Mammary epithelial cell (primary cell): ENCODE measurements at regions of chr1 and their contacts with region 1.

Region 1: GRCh38 chr1:67685067-67685557 is at the start of gene GADD45A:
- DNase-seq: peak; percentile 99
- H3K4me3 ChIP-seq: peak within 1 kb of the TSS; percentile 78 to 96 (median 79)
- H3K27ac ChIP-seq: peak within 1 kb of the TSS; percentile 97
- H3K4me1 ChIP-seq: peaks cover 26% of the 10 kb centered on the region
- H3K27me3 ChIP-seq: no peaks in the 10 kb centered on the region
- CTCF ChIP-seq: no peak
- total RNA-seq, gene GADD45A: 119 to 371 TPM

Region 2: GRCh38 chr1:67570473-67571143 is 114.5 kb before region 1 on chr1:
- CTCF ChIA-PET with region 1: no interaction called
- dilution Hi-C with region 1: no loop called
- in situ Hi-C with region 1: loop called (anchors 5 kb)
- intact Hi-C with region 1: loop called (anchors 1 kb)
- DNase-seq: peak; percentile 99
- H3K4me3 ChIP-seq: no peak overlapping the region
- H3K27ac ChIP-seq: peak overlapping the region; percentile 97
- H3K4me1 ChIP-seq: peaks cover 53% of the 10 kb centered on the region
- H3K27me3 ChIP-seq: no peaks in the 10 kb centered on the region
- CTCF ChIP-seq: no peak

Region 3: DNA sequence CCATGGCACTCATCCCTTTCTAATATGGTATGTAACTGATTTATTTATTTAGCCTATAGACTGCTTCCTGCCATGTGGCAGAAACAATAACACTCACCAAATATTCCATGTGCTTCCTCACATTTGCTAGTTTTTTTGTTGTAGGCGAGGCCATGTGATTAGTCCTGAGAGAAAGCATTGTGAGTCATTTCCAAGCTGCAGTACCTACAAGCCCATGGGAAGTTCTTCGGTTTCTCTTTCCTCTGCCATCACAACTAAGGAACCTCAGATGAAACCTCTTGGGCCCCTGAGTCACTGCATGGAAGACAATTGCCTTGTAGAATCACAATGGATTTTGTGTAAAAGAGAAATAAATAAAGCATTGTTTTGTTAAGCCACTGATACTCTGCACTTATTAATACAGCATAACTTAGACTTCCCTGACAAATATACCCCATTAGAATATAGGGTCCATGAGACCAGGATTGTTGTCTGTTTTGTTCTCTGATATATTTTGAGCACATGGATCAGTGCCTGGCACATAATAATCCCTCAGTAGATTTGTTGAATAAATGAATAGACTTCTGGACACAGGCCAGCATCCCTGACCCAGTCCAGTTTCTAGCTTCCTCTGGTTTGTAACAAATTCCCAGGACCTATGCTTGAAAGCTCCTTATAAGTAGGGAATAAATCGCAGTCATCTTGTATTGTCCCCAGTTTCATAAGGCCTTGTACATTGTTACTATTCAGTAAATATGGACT is 58.4 kb before region 1 on chr1:
- CTCF ChIA-PET with region 1: interaction called, 3 read pairs
- dilution Hi-C with region 1: loop called (anchors 5 kb)
- in situ Hi-C with region 1: no loop called
- intact Hi-C with region 1: loop called (anchors 2 kb)
- DNase-seq: peak; percentile 100
- H3K4me3 ChIP-seq: no peak overlapping the region
- H3K27ac ChIP-seq: peak overlapping the region; percentile 97
- H3K4me1 ChIP-seq: peaks cover 55% of the 10 kb centered on the region
- H3K27me3 ChIP-seq: no peaks in the 10 kb centered on the region
- CTCF ChIP-seq: no peak

Region 4: DNA sequence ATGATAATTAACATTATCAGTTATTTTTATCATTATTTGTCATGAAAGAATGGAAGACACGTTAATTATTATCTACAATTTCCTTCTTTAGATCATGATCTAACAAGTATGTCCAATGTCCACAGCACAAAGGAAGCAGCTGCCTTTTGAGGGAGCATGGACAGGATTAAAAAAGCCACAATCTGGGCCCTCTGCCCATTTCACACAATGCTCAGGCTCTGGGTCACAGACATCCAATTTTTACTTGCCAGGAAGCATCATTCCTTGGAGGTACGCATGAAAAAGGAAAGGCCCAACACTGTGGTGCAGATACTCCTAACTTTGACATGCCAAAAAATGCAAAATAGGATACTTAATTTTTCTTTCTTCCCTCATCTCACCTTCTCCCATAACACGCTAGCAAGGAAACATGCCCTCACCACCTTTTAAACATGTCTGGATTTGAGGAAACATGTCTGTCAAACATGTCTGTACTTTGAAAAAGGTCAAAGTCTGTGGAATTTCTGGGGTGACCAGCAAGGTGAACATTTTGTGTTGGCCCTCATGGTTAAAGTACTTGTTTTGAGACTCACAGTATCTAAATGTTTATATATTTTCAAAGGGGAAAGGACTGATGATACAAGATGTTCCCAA is 39.9 kb after region 1 on chr1:
- CTCF ChIA-PET with region 1: no interaction called
- dilution Hi-C with region 1: loop called (anchors 5 kb)
- in situ Hi-C with region 1: no loop called
- intact Hi-C with region 1: no loop called
- DNase-seq: peak; percentile 85
- H3K4me3 ChIP-seq: no peak overlapping the region
- H3K27ac ChIP-seq: peak overlapping the region; percentile 89
- H3K4me1 ChIP-seq: peaks cover 57% of the 10 kb centered on the region
- H3K27me3 ChIP-seq: no peaks in the 10 kb centered on the region
- CTCF ChIP-seq: no peak

Region 5: DNA sequence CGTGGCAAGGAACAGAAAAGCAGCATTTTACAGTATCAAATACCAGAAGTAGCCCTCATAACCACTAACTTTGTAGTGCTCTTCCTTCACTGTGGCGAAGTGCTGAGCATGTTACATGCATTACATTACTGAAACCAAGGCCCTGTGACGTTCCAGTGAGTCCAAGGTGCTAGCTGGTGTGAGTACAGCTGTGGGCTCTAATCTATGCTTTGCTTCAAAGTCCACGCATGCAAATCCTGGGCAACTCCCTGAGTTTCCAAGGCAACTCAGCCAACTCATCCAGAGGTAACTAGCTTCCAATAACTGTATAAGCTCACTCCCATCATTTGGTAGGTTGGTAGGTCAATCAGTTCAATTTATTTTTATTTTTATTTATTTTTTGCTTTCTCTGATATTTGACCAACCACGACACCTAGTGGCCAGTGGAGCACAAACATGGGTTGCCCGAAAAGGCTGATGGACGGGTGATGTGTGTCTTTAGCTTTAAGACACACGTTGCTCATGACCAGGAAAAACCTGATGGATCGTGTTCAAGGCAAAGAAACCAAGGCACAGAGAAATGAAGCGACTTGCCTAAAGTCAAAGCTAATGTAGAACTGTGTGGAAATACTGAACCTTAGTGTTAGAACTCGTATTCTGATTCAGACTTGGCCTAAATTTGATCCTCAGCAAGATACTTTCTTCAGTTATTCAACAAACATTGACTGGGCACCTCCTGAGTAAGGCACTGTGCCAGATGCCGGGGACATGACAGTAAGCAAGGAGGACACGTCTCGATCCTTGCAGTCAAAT is 75.1 kb after region 1 on chr1:
- CTCF ChIA-PET with region 1: interaction called, 4 read pairs
- dilution Hi-C with region 1: no loop called
- in situ Hi-C with region 1: loop called in 1 of 2 experiments (anchors 5 kb)
- intact Hi-C with region 1: loop called (anchors 1 kb)
- DNase-seq: peak; percentile 81
- H3K4me3 ChIP-seq: no peak overlapping the region
- H3K27ac ChIP-seq: peak overlapping the region; percentile 91
- H3K4me1 ChIP-seq: peaks cover 37% of the 10 kb centered on the region
- H3K27me3 ChIP-seq: no peaks in the 10 kb centered on the region
- CTCF ChIP-seq: peak; percentile 73 to 77

Region 6: DNA sequence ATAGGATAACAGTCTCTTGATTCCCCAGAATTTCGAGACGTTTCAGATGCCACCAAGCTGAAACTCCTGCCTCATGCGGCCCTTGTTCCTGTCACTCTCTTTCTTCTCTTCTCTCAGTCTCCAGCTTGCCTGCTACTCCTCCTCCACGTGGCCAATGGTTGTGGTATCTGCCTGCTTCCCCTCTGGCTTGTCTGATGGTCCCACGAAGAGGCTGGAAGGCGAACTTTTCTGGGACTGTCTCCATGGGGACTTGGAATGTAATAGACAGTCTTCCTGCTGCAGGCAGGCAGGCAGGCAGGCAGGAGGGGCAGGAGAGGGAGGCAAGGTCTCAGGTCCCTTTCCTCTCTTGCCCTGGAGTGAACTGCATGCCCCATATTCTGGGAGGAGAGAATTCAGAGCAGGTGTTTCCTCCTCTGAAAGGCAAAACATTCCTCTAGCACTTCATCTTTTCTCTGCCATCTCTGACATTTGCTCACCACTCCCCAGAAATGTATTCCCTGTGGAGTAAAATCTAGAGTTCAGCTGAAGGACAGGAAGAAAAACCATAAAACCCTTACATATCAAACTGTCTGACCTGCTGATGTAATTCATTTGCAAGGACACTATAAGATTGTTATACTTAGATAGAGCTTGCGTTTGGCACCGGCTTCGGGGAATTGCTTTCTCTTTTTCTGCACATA is 212.3 kb after region 1 on chr1:
- CTCF ChIA-PET with region 1: no interaction called
- dilution Hi-C with region 1: no loop called
- in situ Hi-C with region 1: no loop called
- intact Hi-C with region 1: no loop called
- DNase-seq: no peak
- H3K4me3 ChIP-seq: no peak overlapping the region
- H3K27ac ChIP-seq: no peak overlapping the region
- H3K4me1 ChIP-seq: peaks cover 12% of the 10 kb centered on the region
- H3K27me3 ChIP-seq: no peaks in the 10 kb centered on the region
- CTCF ChIP-seq: no peak

Region 7: DNA sequence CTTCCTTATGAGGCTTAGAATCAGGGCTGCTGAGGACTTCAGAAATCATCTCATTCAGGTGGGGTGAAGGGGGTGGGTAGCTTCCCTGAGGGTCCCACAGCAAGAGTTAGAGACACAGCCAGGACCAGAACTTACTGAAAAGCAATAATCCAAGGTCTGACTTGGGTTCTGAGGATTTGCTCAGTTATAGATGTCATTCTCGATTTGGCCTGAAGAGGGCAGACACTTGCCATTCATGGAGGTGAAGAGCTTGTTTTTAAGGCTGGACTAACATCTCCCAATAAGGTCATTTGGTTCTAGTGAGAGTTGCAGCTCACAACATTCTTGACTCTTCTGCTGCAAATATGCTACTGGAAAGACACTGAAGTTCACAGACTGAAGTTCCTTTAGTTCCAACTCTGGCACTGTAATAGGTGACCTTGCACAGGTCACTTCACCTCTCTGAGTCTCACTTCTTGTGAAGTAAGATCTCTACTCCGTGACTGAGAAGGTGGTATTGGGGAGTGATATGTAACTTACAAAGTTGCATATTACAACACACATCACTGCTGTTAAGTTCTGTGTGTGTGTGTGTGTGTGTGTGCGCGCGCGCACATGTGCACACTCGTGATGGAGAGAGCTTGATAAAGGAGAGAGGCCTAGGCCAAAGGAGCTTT is 435.2 kb after region 1 on chr1:
- CTCF ChIA-PET with region 1: no interaction called
- dilution Hi-C with region 1: no loop called
- in situ Hi-C with region 1: no loop called
- intact Hi-C with region 1: loop called (anchors 10 kb)
- DNase-seq: peak; percentile 64
- H3K4me3 ChIP-seq: no peak overlapping the region
- H3K27ac ChIP-seq: no peak overlapping the region
- H3K4me1 ChIP-seq: no peaks in the 10 kb centered on the region
- H3K27me3 ChIP-seq: no peaks in the 10 kb centered on the region
- CTCF ChIP-seq: peak; percentile 76 to 78